Esophagus muscularis mucosa (tissue), 4 donors: ENCODE measurements at regions of chr19 and their contacts with region 1.

Region 1: DNA sequence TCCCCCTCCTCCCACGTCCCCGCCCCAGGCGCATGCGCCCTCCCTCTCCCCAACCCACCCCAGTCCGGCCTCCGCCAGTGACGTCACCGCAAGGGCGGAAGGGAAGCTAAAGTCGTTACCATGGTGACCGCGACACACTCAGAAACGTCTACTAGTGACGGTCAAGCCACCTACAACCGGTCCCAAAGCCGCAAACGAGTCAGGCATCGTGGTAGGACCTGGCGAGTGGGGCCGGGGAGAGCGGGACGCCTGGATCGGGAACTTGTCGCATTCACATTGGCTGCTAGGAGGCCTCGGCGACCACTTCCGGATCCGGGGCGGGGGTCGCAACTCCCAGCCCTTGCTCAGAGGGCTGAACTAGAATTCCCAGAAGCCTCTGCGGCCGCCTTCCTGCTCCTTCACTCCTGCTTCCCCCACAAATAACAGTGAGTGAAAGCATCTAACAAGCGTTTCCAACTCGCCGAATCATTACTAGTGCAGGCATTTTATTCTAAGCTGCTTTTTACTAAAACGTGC is at the start of gene ZSCAN5A:
- DNase-seq: peak; percentile 99
- H3K4me3 ChIP-seq: peak within 1 kb of the TSS; percentile 67 to 86 (median 75)
- H3K27ac ChIP-seq: peak within 1 kb of the TSS; percentile 93 to 96 (median 96)
- H3K4me1 ChIP-seq: peaks cover 11 to 23% (median 17%) of the 10 kb centered on the region in 4 donors
- H3K27me3 ChIP-seq: no peaks in the 10 kb centered on the region
- CTCF ChIP-seq: no peak
- EP300 ChIP-seq: no peak
- POLR2A ChIP-seq: peak; percentile 5
- total RNA-seq, gene ZSCAN5A: 3.7 to 9.9 (median 6.7) TPM

Region 2: DNA sequence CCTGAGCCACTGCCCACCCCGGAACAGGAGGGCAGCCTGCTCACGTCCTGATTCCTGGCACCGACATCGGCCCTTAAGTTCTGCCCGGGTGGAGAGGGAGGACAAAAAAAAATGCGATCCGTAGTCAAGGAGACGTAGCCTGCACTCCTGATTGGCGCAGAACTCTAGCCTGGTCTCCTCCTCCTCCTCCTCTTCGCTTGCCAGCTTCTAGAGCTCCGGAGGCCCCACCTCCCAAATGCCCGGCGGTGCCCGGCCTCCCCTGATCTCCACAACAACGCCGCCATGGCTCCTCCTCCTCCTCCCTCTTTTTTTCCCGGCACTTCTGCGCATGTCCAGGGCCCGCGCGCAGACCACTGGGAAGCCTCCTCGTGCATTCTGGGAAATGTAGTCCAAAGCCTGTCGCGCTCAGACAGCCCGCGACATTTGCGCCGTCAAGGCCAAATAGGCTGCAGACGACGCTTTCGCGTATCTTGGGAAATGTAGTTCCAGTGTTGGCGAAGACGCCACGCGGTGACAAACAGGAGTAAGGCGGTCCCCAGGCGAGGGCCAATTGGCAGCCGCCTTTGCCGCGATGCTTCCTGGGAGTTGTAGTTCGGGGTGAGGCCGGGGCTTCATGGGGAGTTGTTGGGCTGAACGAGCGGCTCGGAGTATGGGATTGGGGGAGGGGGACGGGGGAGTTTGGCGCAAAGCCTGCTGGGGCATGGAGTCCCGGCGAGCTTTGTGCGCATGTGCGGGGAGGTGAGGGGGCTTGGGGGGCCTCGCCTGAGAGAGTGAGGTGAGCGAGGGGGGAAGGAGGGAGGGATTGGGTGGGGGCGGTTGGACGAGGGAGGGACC is 173.8 kb before region 1 on chr19 and contains the start of gene ZNF444:
- intact Hi-C with region 1: loop called (anchors 10 kb)
- DNase-seq: peak; percentile 99
- H3K4me3 ChIP-seq: peak within 1 kb of the TSS; percentile 64 to 71 (median 66)
- H3K27ac ChIP-seq: peak within 1 kb of the TSS; percentile 89 to 96 (median 92)
- H3K4me1 ChIP-seq: peaks cover 13 to 53% (median 42%) of the 10 kb centered on the region in 4 donors
- H3K27me3 ChIP-seq: no peaks in the 10 kb centered on the region
- CTCF ChIP-seq: no peak
- EP300 ChIP-seq: no peak
- POLR2A ChIP-seq: no peak
- total RNA-seq, gene ZNF444: 32.0 to 78.2 (median 52.1) TPM